Activated CD4-positive, alpha-beta T cell treated with anti-CD3 and anti-CD28 coated beads, Interleukin-2, amount 10 ng/mL, durations not matched to agents 24 days and 14 days (primary cell): ENCODE measurements at regions of chr9 and their contacts with region 1.

Region 1: DNA sequence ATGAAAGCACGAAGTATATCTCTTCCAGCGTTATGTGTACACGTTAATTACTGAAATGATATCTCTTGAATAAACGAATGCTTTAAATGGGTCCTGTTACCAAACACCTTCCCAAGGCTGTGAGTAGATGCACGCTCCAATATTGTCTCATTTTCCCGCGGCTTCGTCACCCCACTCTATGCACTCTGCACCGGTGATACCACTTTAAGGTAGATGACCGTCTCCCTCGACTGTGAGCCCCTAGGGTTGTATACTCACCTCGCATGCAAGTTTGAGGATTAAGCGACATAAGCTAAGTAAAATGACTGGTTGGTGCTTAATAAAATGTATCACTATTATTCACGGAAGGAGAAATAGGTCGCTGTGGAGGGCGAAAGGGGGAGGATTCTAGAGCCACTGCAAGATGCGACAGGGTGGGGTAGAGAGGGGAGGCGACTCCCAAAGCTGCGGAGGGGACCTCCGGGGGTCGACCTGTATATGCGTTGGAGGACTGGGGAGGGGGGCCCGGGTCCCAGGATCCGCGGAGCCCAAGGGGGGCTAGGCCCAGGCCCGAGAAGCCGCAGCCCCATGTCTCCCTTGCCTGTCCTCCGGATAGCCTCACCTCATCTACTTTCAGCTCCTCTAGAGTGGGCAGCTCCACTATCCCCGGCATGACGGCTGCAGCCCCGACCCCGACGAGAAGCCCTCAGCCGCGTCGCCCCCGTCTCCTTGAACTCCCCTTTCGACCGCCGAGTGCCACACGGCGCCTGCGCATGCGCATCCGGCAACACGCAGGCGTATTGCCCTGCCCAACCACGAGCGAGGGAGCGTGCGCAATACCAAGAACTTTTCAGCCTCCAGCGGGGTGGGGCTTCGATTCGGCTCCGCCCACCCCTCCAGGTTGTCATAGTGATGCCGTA is at the starts of genes MORN5 and NDUFA8:
- DNase-seq: peak; percentile 99
- H3K4me3 Mint-ChIP-seq: peak within 1 kb of the TSS; percentile 99
- H3K27ac Mint-ChIP-seq: peak within 1 kb of the TSS; percentile 98
- H3K4me1 Mint-ChIP-seq: peaks cover 27% of the 10 kb centered on the region
- H3K27me3 Mint-ChIP-seq: peaks cover 28% of the 10 kb centered on the region
- total RNA-seq, gene MORN5: not detected in 2 replicates
- total RNA-seq, gene NDUFA8: 50.4 and 51.9 TPM in 2 replicates

Region 2: DNA sequence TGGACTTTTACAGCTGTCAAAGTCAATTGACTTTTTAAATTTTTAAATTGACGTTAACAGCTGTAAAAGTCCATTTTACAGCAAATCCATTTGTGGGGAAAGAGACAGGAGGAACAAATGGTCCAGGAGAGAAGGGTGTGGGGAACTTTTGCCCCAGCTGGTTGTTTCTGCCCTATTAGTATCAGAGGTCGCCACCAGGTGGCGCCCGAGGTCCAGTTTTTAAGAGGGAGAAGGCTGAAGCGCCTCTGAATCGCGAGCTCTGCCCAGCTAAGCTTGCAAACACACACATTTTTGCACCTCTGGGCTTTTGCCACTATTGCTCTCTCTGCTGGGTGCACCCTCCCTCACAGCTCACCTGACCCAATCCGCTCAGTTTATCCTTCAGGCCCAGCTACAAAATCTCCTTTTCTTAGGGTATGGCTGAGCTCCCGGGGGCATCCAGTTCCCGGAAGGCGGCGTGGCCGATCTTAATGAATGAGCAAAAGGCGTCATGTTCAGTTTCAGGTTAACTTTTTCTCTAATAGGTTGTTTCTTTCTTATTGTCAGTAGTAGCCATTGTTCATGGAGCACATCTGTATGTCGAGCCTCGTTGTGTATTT is 59.9 kb before region 1 on chr9:
- intact Hi-C with region 1: loop called (anchors 2 kb)
- DNase-seq: peak; percentile 93
- H3K4me3 Mint-ChIP-seq: peak overlapping the region; percentile 24
- H3K27ac Mint-ChIP-seq: no peak overlapping the region
- H3K4me1 Mint-ChIP-seq: peaks cover 16% of the 10 kb centered on the region
- H3K27me3 Mint-ChIP-seq: peaks cover 28% of the 10 kb centered on the region

Region 3: DNA sequence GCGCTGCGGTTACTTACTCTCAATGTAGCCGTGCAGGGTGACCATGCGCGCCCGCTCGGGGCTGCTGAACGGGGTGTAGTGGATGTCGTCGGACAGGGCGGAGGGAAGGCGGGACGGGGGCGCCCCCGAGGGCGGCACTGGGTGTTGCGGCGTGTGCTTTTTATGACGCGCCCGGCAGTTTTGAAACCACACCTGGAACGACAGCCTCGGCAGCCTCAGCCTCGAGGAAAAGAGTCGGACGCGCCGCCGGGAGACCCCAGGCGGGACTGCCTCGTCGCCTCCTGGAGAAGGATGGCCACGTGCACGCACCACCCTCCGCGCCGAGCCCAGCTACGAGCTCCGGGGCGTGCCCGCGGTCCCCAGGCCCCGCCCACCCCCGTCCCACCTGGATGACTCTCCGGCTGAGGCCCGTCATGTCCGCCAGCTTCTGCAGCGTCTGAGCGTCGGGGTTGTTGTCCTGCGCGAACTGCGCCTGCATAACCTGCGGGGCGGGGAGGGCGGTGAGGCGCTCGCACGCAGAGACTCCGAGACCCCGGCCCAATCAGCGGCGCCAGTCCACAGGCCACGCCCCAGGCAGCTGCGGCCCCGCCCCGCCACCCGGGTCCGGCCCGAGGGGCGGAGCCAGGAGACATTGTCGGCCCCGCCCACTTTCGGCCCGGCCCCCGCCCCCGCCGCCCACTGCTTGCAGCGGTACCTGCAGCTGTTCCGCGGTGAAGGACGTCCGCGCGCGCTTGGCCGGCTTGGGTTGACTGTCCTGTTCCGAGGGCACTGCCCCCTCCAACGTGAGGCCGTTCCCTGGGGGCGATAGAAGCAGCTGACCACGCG is 54.5 kb after region 1 on chr9:
- intact Hi-C with region 1: loop called (anchors 5 kb)
- DNase-seq: peak; percentile 91
- H3K4me3 Mint-ChIP-seq: peak overlapping the region; percentile 60
- H3K27ac Mint-ChIP-seq: no peak overlapping the region
- H3K4me1 Mint-ChIP-seq: peaks cover 14% of the 10 kb centered on the region
- H3K27me3 Mint-ChIP-seq: peaks cover 68% of the 10 kb centered on the region

Region 4: GRCh38 chr9:122264360-122265148 is 105.3 kb after region 1 on chr9 and contains the starts of genes MRRF and RBM18:
- intact Hi-C with region 1: loop called (anchors 1 kb)
- DNase-seq: peak; percentile 98
- H3K4me3 Mint-ChIP-seq: peak within 1 kb of the TSS; percentile 98
- H3K27ac Mint-ChIP-seq: peak within 1 kb of the TSS; percentile 100
- H3K4me1 Mint-ChIP-seq: peaks cover 39% of the 10 kb centered on the region
- H3K27me3 Mint-ChIP-seq: no peaks in the 10 kb centered on the region
- total RNA-seq, gene MRRF: 68.8 and 73.1 TPM in 2 replicates
- total RNA-seq, gene RBM18: 24.9 and 25.7 TPM in 2 replicates

Region 5: GRCh38 chr9:122297512-122297911 is 138.2 kb after region 1 on chr9:
- intact Hi-C with region 1: no loop called
- DNase-seq: no peak
- H3K4me3 Mint-ChIP-seq: no peak overlapping the region
- H3K27ac Mint-ChIP-seq: no peak overlapping the region
- H3K4me1 Mint-ChIP-seq: no peaks in the 10 kb centered on the region
- H3K27me3 Mint-ChIP-seq: no peaks in the 10 kb centered on the region